ENCODE measurements at regions of chr13 and their contacts with region 1.

Region 1: DNA sequence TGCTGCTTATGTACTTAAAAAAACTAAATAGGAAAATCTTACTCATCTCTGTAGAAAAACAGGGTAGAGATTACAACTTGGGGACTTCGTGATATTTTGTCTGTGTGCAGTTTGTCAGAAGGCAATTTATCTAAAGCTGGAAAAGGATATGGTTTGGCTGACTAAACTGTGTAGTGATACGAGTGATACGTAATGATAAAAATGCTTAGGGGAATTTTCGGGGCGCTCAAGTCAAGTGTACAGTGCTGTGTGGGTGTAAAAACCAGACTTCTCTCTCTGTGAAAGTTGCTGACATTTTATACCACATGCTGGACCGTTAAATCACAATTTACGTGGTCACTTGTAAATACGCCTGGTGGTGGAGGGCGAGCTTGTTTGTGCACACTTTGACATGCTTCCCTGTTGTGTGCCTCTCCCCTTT is 221.7 kb downstream of the KCNRG start:
- DNase-seq: peak; percentile 43
- H3K4me3 Mint-ChIP-seq: no peak overlapping the region
- H3K27ac Mint-ChIP-seq: peak overlapping the region; percentile 56
- H3K4me1 Mint-ChIP-seq: peaks cover 38% of the 10 kb centered on the region
- H3K27me3 Mint-ChIP-seq: peaks cover 32% of the 10 kb centered on the region

Region 2: GRCh38 chr13:49996951-49997895 is 239.7 kb before region 1 on chr13 and contains the start of gene TRIM13:
- intact Hi-C with region 1: loop called (anchors 5 kb)
- DNase-seq: peak; percentile 79
- H3K4me3 Mint-ChIP-seq: peak within 1 kb of the TSS; percentile 85
- H3K27ac Mint-ChIP-seq: peak within 1 kb of the TSS; percentile 89
- H3K4me1 Mint-ChIP-seq: peaks cover 31% of the 10 kb centered on the region
- H3K27me3 Mint-ChIP-seq: no peaks in the 10 kb centered on the region
- total RNA-seq, gene TRIM13: 17.2 and 17.9 TPM in 2 replicates

Region 3: GRCh38 chr13:50192272-50192813 is 44.6 kb before region 1 on chr13:
- intact Hi-C with region 1: loop called (anchors 5 kb)
- DNase-seq: no peak
- H3K4me3 Mint-ChIP-seq: no peak overlapping the region
- H3K27ac Mint-ChIP-seq: no peak overlapping the region
- H3K4me1 Mint-ChIP-seq: peaks cover 19% of the 10 kb centered on the region
- H3K27me3 Mint-ChIP-seq: peaks cover 62% of the 10 kb centered on the region

Region 4: DNA sequence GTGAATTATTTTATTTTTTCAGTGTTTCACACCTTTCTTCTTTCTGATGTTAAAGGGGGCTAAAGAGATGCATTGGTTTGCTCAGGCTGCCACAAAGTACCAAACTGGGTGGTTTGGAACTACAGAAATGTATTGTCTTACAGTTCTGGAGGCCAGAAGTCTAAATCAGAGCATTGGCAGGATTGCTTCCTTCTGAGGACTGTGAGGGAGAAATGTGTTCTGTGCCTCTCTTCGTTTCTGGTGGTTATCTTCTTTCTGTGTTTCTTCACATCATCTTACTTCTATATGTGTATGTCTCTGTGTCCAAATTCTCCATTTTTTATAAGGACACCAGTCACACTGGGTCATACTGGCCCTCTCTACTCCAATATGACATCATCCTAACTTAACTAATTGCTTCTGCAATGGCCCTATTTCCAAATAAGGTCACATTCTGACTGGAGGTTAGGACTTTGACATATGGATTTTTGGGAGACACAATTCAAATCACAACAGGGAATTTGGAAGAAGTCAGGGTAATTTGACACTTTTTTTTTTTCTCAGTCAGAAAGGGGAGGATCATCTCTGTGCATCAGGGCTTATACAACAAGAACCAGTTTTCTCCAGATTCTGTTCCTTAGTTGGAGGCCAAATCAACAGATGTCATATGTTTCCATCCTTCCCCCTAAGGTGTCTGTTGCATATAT is 33.5 kb before region 1 on chr13:
- intact Hi-C with region 1: no loop called
- DNase-seq: no peak
- H3K4me3 Mint-ChIP-seq: no peak overlapping the region
- H3K27ac Mint-ChIP-seq: no peak overlapping the region
- H3K4me1 Mint-ChIP-seq: no peaks in the 10 kb centered on the region
- H3K27me3 Mint-ChIP-seq: peaks cover 56% of the 10 kb centered on the region

Region 5: GRCh38 chr13:50255639-50256038 is 18.7 kb after region 1 on chr13:
- intact Hi-C with region 1: loop called (anchors 2 kb)
- DNase-seq: no peak
- H3K4me3 Mint-ChIP-seq: no peak overlapping the region
- H3K27ac Mint-ChIP-seq: no peak overlapping the region
- H3K4me1 Mint-ChIP-seq: peaks cover 27% of the 10 kb centered on the region
- H3K27me3 Mint-ChIP-seq: peaks cover 66% of the 10 kb centered on the region

Region 6: GRCh38 chr13:51825165-51825592 is 1588.3 kb after region 1 on chr13:
- intact Hi-C with region 1: loop called (anchors 10 kb)
- DNase-seq: no peak
- H3K4me3 Mint-ChIP-seq: peak overlapping the region; percentile 32
- H3K27ac Mint-ChIP-seq: peak overlapping the region; percentile 33
- H3K4me1 Mint-ChIP-seq: peaks cover 69% of the 10 kb centered on the region
- H3K27me3 Mint-ChIP-seq: peaks cover 53% of the 10 kb centered on the region

Measured in activated T-helper 2 cell treated with anti-CD3 and anti-CD28 coated beads, Interferon-gamma antibody, Interleukin-2, Interleukin-4, amounts not matched to agents 10 μg/mL and 5 μg/mL and 100 μg/mL, durations not matched to agents 14 hours and 24 hours and 36 hours (primary cell).